Lower leg skin (tissue), 4 donors: ENCODE measurements at regions of chr2 and their contacts with region 1.

Region 1: GRCh38 chr2:234550511-234551107 is 53.7 kb upstream of the ARL4C start:
- DNase-seq: peak; percentile 66 to 90
- H3K4me3 ChIP-seq: no peak overlapping the region
- CTCF ChIP-seq: peak in 1 of 3 donors; percentile 93
- POLR2A ChIP-seq: no peak

Region 2: DNA sequence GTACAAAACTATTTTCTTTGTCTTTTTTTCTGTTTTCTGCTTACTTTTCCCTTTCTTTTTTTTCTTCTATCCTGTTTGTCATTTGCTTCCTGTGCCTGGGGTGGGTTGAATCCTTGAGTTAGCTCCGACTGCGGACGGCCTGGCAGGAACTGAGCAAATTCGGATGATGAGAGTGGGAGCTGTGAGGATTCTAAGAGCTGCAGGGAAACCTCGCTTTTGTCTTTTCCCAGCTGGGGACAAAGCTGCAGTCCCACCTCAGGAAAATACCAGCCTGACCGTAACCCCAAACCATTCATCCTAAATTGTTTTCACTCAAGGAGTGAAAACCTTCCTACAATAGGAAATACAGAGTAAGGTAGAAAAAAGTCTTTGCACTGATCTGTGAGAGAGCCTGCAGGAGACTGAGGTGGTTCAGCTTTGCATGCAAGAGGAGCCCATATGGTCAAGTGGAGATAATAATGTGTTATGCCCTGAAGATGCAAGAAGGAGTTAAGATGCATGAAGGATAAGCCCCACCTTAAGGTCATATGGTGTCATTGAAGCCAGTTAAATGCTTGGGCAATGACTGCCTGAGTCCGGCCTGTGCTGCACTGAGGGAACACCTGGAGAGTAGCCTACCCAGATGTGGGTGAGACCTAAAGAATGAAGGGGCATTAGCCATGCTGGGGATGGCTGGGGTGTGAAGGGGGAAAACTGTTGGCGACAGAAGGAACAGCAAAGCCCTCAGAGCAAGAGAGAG is 22.0 kb before region 1 on chr2:
- intact Hi-C with region 1: no loop called
- DNase-seq: no peak
- H3K4me3 ChIP-seq: no peak overlapping the region
- CTCF ChIP-seq: no peak
- POLR2A ChIP-seq: no peak

Region 3: DNA sequence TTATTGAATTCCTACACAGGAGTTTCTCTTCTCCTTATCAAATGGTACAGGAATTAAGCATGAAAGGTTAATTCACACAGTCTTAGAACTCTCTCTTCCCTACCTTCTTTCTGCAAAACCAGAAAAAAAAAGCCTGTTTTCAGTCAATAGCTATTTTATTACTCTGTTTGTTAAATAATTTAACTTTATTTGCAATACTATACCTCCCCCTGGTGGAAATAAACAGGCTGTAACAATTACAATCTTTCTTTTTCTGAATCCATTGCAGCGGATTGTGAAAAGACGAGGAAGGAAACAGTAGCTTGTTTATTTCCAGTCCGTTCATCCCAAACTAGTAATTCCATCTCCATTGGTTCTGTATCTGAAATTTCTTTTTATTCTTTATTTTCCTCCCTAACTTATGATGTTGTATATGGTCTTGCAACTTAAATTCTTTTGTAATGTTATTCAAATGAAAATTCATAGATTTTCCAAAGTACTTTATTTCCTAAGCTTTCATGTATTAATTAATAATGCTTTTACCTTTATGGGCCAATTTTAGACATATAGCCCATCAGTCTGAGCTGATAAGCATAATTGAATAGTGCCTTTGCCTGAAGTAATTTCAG is 566.4 kb after region 1 on chr2:
- intact Hi-C with region 1: loop called (anchors 5 kb)
- DNase-seq: no peak
- H3K4me3 ChIP-seq: no peak overlapping the region
- CTCF ChIP-seq: no peak
- POLR2A ChIP-seq: no peak